ENCODE measurements at regions of chr11 and their contacts with region 1.

Region 1: GRCh38 chr11:4763096-4763495 is 6.6 kb downstream of the OR51F1 start:
- DNase-seq: no peak
- H3K4me3 ChIP-seq: no peak overlapping the region
- CTCF ChIP-seq: no peak
- POLR2A ChIP-seq: no peak

Region 2: DNA sequence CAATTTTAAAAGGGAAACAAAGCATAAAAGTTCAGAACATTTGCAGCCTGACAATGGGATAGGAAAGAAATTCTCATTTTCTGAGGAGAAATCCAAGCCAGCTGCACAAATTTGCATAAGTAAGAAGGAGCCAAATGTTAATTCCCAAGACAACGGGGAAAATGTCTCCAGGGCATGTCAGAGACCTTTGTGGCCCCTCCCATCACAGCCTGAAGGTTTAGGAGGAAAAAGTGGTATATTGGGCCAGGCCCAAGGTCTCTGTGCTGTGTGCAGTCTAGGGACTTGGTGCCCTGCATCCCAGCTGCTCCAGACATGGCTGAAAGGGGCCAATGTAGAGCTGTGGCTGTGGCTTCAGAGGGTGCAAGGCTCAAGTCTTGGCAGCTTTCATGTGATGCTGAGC is 19.4 kb after region 1 on chr11:
- intact Hi-C with region 1: loop called (anchors 2 kb)
- DNase-seq: no peak
- H3K4me3 ChIP-seq: no peak overlapping the region
- CTCF ChIP-seq: no peak
- POLR2A ChIP-seq: no peak